K562 (cell line): ENCODE measurements at regions of chr19 and their contacts with region 1.

Region 1: DNA sequence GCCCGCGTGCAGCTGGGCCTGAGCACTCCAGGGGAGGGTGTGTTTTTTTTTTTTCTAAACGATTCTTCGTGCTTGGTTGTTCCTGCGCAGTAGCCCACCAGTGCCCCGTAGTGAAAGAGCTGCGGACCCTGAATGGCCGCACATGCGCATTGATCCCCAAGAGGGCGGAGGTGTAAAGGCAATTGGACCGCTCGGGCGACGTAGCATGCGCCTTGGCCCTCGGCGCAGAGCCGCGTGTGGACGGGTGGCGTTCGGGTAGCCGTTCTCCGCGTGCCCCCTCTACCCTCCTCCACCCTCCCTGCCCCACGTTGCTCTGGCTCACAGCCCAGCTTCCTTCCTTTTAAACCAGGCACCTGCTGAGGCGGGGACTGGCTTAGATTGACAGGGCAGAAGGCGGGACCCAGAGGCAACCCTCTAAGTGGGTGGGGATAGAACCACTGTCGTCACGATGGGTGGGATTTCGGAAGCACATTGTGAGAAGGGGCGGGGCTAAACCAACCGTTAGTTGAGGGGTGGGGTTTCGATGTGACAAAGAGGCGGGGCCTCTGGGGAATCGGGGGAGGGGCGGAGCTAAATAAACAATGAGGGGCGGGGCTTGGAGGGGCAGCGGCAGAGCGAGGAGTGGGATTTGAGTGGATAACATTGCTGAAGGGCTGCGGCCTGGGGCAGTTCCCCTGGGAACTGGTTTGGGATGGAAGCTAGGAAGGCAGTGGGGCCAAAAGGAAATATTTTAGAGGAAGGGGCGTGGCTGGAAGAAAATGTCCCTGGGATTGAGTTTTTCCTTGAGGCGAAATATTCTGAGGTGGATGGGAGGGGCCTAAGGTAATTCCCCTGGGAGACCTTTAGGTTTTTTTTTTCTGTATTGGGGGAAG is 543 bp upstream of the NUP62 start:
- DNase-seq: peak; percentile 90 to 97 (median 94)
- ATAC-seq: peak; percentile 71
- H3K4me3 ChIP-seq: peak overlapping the region; percentile 55
- H3K27ac ChIP-seq: peak overlapping the region; percentile 92
- H3K4me1 ChIP-seq: peaks cover 28 to 51% of the 10 kb centered on the region in 2 experiments
- H3K27me3 ChIP-seq: no peaks in the 10 kb centered on the region
- CTCF ChIP-seq: no peak
- EP300 ChIP-seq: no peak
- POLR2A ChIP-seq: peak; percentile 97
- RAD21 ChIP-seq: no peak

Region 2: DNA sequence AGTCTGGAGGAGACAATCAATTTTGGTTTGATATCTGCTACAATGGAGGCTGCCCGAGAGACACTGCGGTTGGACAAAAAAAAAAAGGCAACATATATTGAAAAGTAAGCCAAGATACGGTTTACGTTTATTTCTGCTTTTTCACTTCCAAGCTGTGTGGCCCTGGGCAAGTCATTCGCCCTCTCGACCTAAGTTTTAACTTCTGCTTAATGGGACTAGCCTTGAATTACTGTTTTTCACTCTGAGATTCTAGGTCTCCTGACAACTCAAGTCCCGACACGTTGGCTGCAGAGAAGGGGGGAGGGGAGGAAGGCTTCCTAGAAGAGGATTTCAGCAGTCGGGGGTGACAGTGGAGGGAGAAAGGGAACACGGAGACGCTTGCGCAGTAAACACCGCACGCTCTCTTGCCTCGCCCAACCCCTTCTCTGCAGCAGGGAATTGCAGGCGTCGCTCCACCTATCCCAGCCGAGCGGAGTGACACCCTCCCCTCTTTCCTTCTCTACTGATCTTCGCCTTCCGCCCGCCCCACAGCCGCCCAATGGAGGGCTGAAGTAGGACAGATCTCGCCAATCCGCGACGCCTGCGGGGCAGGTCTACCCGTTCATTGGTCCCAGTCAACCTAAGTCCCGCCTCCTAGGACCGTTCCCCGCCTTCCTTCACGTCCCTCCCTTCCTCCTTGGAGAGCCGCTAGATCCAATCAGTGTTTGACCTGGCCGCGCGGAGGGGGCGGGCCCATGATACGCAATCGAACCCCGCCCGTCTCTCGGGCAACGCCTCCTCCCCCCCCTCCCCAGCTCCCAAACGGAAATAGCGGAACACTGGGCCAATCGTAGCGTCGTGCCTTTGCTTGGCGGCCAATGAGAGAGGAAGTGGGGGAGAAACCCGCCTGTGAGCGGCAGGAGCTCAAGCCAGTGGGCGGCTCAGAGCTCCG is 163.6 kb before region 1 on chr19:
- CTCF ChIA-PET with region 1: no interaction called
- POLR2A ChIA-PET with region 1: no interaction called
- in situ Hi-C with region 1: no loop called
- intact Hi-C with region 1: no loop called
- DNase-seq: peak; percentile 99 to 100 (median 99)
- ATAC-seq: peak; percentile 91
- H3K4me3 ChIP-seq: peak overlapping the region; percentile 32
- H3K27ac ChIP-seq: peak overlapping the region; percentile 92
- H3K4me1 ChIP-seq: peaks cover 43 to 51% of the 10 kb centered on the region in 2 experiments
- H3K27me3 ChIP-seq: no peaks in the 10 kb centered on the region
- CTCF ChIP-seq: no peak
- EP300 ChIP-seq: 0 out of 2 replicates have a peak, but pooled peaks have one; percentile 35
- POLR2A ChIP-seq: peak; percentile 89
- RAD21 ChIP-seq: peak in 1 of 2 experiments; percentile 35; a peak in 2 of 4 replicates

Region 3: GRCh38 chr19:49869441-49870176 is 60.2 kb before region 1 on chr19:
- CTCF ChIA-PET with region 1: no interaction called
- POLR2A ChIA-PET with region 1: interaction called, 9 read pairs
- in situ Hi-C with region 1: no loop called
- intact Hi-C with region 1: loop called (anchors 5 kb)
- DNase-seq: peak; percentile 82 to 99 (median 89)
- ATAC-seq: peak; percentile 87
- H3K4me3 ChIP-seq: peak overlapping the region; percentile 47
- H3K27ac ChIP-seq: peak overlapping the region; percentile 70
- H3K4me1 ChIP-seq: peaks cover 40 to 84% of the 10 kb centered on the region in 2 experiments
- H3K27me3 ChIP-seq: no peaks in the 10 kb centered on the region
- CTCF ChIP-seq: 0 out of 6 replicates have a peak, but pooled peaks of 1 of the 3 experiments have one; percentile 1
- EP300 ChIP-seq: no peak
- POLR2A ChIP-seq: peak; percentile 60
- RAD21 ChIP-seq: no peak

Region 4: GRCh38 chr19:49877020-49877878 is 52.6 kb before region 1 on chr19 and contains the starts of genes AKT1S1 and TBC1D17:
- CTCF ChIA-PET with region 1: no interaction called
- POLR2A ChIA-PET with region 1: interaction called, 19 read pairs
- in situ Hi-C with region 1: no loop called
- intact Hi-C with region 1: no loop called
- DNase-seq: peak; percentile 89 to 99 (median 94)
- ATAC-seq: peak; percentile 87
- H3K4me3 ChIP-seq: peak within 1 kb of the TSS; percentile 84
- H3K27ac ChIP-seq: peak within 1 kb of the TSS; percentile 99
- H3K4me1 ChIP-seq: peaks cover 9 to 76% of the 10 kb centered on the region in 2 experiments; a peak in 4 of 5 replicates
- H3K27me3 ChIP-seq: no peaks in the 10 kb centered on the region
- CTCF ChIP-seq: no peak; a peak in 1 of 6 replicates
- EP300 ChIP-seq: no peak
- POLR2A ChIP-seq: peak; percentile 88
- RAD21 ChIP-seq: no peak
- polyA plus RNA-seq, gene AKT1S1: 1.2 TPM
- polyA plus RNA-seq, gene TBC1D17: 0.42 to 0.46 TPM

Region 5: DNA sequence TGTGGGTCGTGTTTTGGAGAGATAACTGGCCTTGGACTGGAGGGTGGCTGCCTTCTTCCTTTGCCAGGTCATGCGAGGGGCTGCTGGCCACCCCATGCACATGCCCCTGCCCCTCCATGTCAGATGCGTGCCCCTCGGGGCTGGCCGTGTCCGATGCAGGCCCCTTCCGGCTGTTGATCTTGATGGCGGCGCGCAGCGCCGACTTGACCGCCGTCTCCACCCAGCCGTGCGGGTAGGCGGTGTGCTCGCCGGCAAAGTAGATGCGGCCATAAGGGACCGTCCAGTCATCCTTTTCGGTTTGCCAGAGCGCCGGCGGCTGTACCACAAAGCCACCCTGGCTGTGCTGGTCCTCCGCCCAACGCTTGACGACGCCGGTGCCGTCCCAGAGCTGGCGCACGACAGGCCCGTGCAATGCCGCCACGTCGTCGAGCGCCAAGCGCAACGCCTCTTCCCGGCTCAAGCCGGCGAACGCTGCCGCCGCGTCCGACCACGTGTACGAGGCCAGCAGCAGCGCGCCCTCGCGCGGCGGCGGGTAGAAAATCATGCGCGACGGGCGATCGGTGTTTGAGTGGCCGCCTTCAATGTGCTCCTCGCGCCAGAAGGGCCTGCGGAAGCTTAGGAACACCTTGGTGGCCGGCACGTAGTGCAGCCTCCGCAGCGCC is 40.0 kb before region 1 on chr19:
- CTCF ChIA-PET with region 1: no interaction called
- POLR2A ChIA-PET with region 1: interaction called, 11 read pairs
- in situ Hi-C with region 1: no loop called
- intact Hi-C with region 1: no loop called
- DNase-seq: peak; percentile 64 to 95 (median 68)
- ATAC-seq: peak; percentile 86
- H3K4me3 ChIP-seq: peak overlapping the region; percentile 47
- H3K27ac ChIP-seq: peak overlapping the region; percentile 89
- H3K4me1 ChIP-seq: peaks cover 12 to 49% of the 10 kb centered on the region in 2 experiments
- H3K27me3 ChIP-seq: peaks cover 2 to 3% of the 10 kb centered on the region in 2 experiments; a peak in 3 of 5 replicates
- CTCF ChIP-seq: peak; percentile 89 to 94 (median 91)
- EP300 ChIP-seq: peak; percentile 34; the same call in 1 of the 2 replicates
- POLR2A ChIP-seq: peak; percentile 63
- RAD21 ChIP-seq: peak; percentile 32 to 70; a peak in 3 of 4 replicates

Region 6: DNA sequence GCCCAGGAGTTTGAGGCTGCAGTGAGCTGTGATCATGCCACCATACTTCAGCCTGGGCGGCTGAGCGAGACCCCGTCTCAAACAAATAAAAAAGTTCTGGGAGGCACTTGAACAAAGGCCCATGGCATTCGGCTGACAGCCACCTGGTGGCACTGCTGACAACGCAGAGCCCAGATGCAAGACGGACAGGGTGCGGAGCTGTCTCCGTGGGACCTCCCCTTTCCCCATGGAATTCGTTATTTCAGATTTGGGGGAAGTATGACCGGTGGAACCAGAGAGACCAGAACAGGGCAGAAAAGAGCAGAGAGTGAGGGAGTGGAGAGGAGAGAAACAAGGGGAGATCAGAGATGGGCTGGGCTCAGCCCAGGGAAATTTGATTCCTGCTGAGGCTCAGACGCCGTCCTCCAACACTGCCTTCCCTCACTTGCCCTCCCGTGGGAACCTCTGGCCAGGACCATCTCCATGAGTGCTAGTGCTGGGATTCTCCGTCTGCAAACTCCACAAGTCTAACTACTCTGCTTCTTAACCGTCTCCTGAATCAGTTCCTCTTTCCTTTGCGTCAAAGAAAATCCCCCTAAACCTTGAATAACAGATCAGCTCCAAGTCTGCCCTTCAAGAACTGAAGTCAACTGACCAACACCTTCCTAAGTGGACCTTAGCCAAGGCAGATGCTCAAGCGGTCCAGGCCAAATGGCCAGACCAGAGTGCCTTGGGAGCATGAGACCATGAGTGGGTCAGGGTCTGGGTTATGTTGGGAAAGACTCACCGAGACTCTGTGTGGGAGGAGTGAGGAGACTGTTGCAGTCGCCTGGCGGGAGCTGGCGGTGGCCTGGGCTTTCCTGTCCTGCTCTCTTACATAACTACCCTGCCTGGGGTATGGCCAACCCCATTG is 12.8 kb before region 1 on chr19:
- CTCF ChIA-PET with region 1: no interaction called
- POLR2A ChIA-PET with region 1: interaction called, 105 read pairs
- in situ Hi-C with region 1: no loop called
- intact Hi-C with region 1: no loop called
- DNase-seq: no peak
- ATAC-seq: no peak
- H3K4me3 ChIP-seq: no peak overlapping the region
- H3K27ac ChIP-seq: no peak overlapping the region
- H3K4me1 ChIP-seq: peaks cover 0 to 22% of the 10 kb centered on the region in 2 experiments; a peak in 2 of 5 replicates
- H3K27me3 ChIP-seq: no peaks in the 10 kb centered on the region
- CTCF ChIP-seq: peak in 2 of 3 experiments; percentile 18 to 26; a peak in 2 of 6 replicates
- EP300 ChIP-seq: no peak
- POLR2A ChIP-seq: no peak
- RAD21 ChIP-seq: no peak

Region 7: GRCh38 chr19:50039968-50040367 is 110.1 kb after region 1 on chr19:
- CTCF ChIA-PET with region 1: no interaction called
- POLR2A ChIA-PET with region 1: no interaction called
- in situ Hi-C with region 1: no loop called
- intact Hi-C with region 1: no loop called
- DNase-seq: no peak
- ATAC-seq: no peak
- H3K4me3 ChIP-seq: no peak overlapping the region
- H3K27ac ChIP-seq: no peak overlapping the region
- H3K4me1 ChIP-seq: no peaks in the 10 kb centered on the region
- H3K27me3 ChIP-seq: no peaks in the 10 kb centered on the region
- CTCF ChIP-seq: no peak
- EP300 ChIP-seq: no peak
- POLR2A ChIP-seq: no peak
- RAD21 ChIP-seq: no peak